ENCODE measurements at regions of chr2 and their contacts with region 1.

Region 1: GRCh38 chr2:28594289-28595108 is 98.6 kb downstream of the PLB1 start:
- DNase-seq: peak; percentile 86
- H3K4me3 Mint-ChIP-seq: peak overlapping the region; percentile 35
- H3K27ac Mint-ChIP-seq: peak overlapping the region; percentile 80
- H3K4me1 Mint-ChIP-seq: peaks cover 32% of the 10 kb centered on the region
- H3K27me3 Mint-ChIP-seq: no peaks in the 10 kb centered on the region

Region 2: GRCh38 chr2:28419443-28420270 is 174.8 kb before region 1 on chr2:
- CTCF ChIA-PET with region 1: no interaction called
- POLR2A ChIA-PET with region 1: no interaction called
- DNase-seq: no peak
- H3K4me3 Mint-ChIP-seq: no peak overlapping the region
- H3K27ac Mint-ChIP-seq: no peak overlapping the region
- H3K4me1 Mint-ChIP-seq: peaks cover 30% of the 10 kb centered on the region
- H3K27me3 Mint-ChIP-seq: no peaks in the 10 kb centered on the region

Region 3: GRCh38 chr2:28471214-28471613 is 123.3 kb before region 1 on chr2:
- CTCF ChIA-PET with region 1: no interaction called
- POLR2A ChIA-PET with region 1: no interaction called
- DNase-seq: no peak
- H3K4me3 Mint-ChIP-seq: no peak overlapping the region
- H3K27ac Mint-ChIP-seq: peak overlapping the region; percentile 77
- H3K4me1 Mint-ChIP-seq: peaks cover 24% of the 10 kb centered on the region
- H3K27me3 Mint-ChIP-seq: no peaks in the 10 kb centered on the region

Region 4: GRCh38 chr2:28528206-28528605 is 66.3 kb before region 1 on chr2:
- CTCF ChIA-PET with region 1: no interaction called
- POLR2A ChIA-PET with region 1: no interaction called
- DNase-seq: no peak
- H3K4me3 Mint-ChIP-seq: no peak overlapping the region
- H3K27ac Mint-ChIP-seq: no peak overlapping the region
- H3K4me1 Mint-ChIP-seq: peaks cover 5% of the 10 kb centered on the region
- H3K27me3 Mint-ChIP-seq: peaks cover 31% of the 10 kb centered on the region

Region 5: GRCh38 chr2:28577791-28578680 is 16.5 kb before region 1 on chr2:
- CTCF ChIA-PET with region 1: interaction called, 15 read pairs
- POLR2A ChIA-PET with region 1: no interaction called
- DNase-seq: no peak
- H3K4me3 Mint-ChIP-seq: no peak overlapping the region
- H3K27ac Mint-ChIP-seq: no peak overlapping the region
- H3K4me1 Mint-ChIP-seq: peaks cover 15% of the 10 kb centered on the region
- H3K27me3 Mint-ChIP-seq: no peaks in the 10 kb centered on the region

Region 6: DNA sequence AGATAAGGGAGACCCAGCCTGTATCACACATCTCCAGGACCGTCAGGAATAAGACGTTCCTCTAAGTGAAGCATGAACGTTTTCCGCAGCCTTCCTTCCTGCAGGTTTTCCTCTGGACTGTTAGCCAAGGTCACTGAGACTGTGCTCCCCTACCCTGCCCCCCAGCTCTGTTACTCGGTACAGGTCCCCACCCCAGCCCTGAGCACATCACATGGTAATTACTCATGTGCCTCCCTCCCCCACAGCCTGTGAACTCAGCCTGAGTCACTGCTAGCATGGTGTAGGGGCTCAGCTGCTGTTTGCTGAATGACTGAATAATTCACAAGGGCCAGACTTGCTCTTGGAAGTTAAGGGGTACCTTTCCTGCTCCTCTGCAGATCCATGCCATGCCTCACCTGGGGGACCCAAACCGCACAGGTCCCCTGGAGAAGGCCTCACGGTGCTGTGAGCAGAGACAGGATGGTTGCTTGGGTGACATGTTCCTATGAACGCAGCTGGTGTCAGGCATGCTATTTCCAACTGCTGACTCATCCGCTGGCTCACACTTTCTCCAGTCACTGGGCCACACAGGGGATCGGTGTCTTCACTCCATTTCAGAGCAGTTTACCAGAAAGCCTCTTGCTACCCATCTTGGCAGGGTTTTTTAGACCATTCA is 10.5 kb before region 1 on chr2:
- CTCF ChIA-PET with region 1: interaction called, 15 read pairs
- POLR2A ChIA-PET with region 1: no interaction called
- DNase-seq: peak; percentile 39
- H3K4me3 Mint-ChIP-seq: no peak overlapping the region
- H3K27ac Mint-ChIP-seq: peak overlapping the region; percentile 76
- H3K4me1 Mint-ChIP-seq: peaks cover 63% of the 10 kb centered on the region
- H3K27me3 Mint-ChIP-seq: no peaks in the 10 kb centered on the region

Region 7: DNA sequence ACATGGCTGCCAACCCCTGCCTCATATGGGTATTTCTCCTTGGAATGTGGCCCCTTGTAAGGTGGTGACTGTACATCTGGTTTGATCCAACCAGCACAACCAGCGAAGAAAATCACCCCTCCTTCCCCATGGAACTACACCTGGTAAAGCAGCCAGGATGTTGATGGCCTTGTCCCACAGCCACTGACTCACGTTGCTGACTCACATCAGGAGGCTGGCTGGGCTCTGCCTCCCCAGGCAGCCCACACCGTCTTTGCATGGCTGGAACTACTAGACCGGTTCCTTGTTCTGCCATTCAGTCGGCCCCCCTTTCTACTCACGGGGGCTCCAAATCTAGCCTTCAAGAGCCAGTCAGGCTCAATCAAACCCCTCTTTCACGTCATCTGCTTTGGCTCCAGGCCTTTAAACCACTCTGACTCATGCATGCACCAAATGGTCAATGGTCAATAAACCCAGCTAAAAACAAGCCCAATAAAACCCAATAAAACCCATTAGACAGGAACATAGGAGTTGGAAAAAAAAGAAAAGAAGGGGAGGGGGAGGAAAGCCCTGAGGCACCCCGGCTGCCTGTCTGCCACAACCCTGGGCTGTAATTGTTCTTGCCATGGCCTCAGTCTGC is 16.2 kb after region 1 on chr2:
- CTCF ChIA-PET with region 1: interaction called, 57 read pairs
- POLR2A ChIA-PET with region 1: no interaction called
- DNase-seq: no peak
- H3K4me3 Mint-ChIP-seq: no peak overlapping the region
- H3K27ac Mint-ChIP-seq: no peak overlapping the region
- H3K4me1 Mint-ChIP-seq: peaks cover 38% of the 10 kb centered on the region
- H3K27me3 Mint-ChIP-seq: no peaks in the 10 kb centered on the region

Region 8: GRCh38 chr2:28621172-28622100 is 26.9 kb after region 1 on chr2:
- CTCF ChIA-PET with region 1: interaction called, 12 read pairs
- POLR2A ChIA-PET with region 1: no interaction called
- DNase-seq: peak; percentile 89
- H3K4me3 Mint-ChIP-seq: peak overlapping the region; percentile 60
- H3K27ac Mint-ChIP-seq: peak overlapping the region; percentile 94
- H3K4me1 Mint-ChIP-seq: peaks cover 89% of the 10 kb centered on the region
- H3K27me3 Mint-ChIP-seq: no peaks in the 10 kb centered on the region

Region 9: GRCh38 chr2:28751252-28751955 is 156.9 kb after region 1 on chr2 and contains the start of gene PPP1CB:
- CTCF ChIA-PET with region 1: interaction called, 41 read pairs
- POLR2A ChIA-PET with region 1: interaction called, 12 read pairs
- DNase-seq: peak; percentile 94
- H3K4me3 Mint-ChIP-seq: peak within 1 kb of the TSS; percentile 83
- H3K27ac Mint-ChIP-seq: peak within 1 kb of the TSS; percentile 98
- H3K4me1 Mint-ChIP-seq: peaks cover 53% of the 10 kb centered on the region
- H3K27me3 Mint-ChIP-seq: no peaks in the 10 kb centered on the region
- total RNA-seq, gene PPP1CB: 171 to 188 TPM

Region 10: GRCh38 chr2:28871620-28872019 is 277.1 kb after region 1 on chr2:
- CTCF ChIA-PET with region 1: no interaction called
- POLR2A ChIA-PET with region 1: no interaction called
- DNase-seq: no peak
- H3K4me3 Mint-ChIP-seq: peak overlapping the region; percentile 96
- H3K27ac Mint-ChIP-seq: peak overlapping the region; percentile 99
- H3K4me1 Mint-ChIP-seq: peaks cover 28% of the 10 kb centered on the region
- H3K27me3 Mint-ChIP-seq: peaks cover 17% of the 10 kb centered on the region